Activated naive CD4-positive, alpha-beta T cell treated with anti-CD3 and anti-CD28 coated beads for 36 hours (primary cell): ENCODE measurements at regions of chr2 and their contacts with region 1.

Region 1: GRCh38 chr2:102436323-102436722 is 13.4 kb downstream of the IL18RAP start:
- DNase-seq: peak; percentile 56
- H3K4me3 Mint-ChIP-seq: no peak overlapping the region
- H3K27ac Mint-ChIP-seq: peak overlapping the region; percentile 68
- H3K4me1 Mint-ChIP-seq: peaks cover 27% of the 10 kb centered on the region
- H3K27me3 Mint-ChIP-seq: no peaks in the 10 kb centered on the region

Region 2: DNA sequence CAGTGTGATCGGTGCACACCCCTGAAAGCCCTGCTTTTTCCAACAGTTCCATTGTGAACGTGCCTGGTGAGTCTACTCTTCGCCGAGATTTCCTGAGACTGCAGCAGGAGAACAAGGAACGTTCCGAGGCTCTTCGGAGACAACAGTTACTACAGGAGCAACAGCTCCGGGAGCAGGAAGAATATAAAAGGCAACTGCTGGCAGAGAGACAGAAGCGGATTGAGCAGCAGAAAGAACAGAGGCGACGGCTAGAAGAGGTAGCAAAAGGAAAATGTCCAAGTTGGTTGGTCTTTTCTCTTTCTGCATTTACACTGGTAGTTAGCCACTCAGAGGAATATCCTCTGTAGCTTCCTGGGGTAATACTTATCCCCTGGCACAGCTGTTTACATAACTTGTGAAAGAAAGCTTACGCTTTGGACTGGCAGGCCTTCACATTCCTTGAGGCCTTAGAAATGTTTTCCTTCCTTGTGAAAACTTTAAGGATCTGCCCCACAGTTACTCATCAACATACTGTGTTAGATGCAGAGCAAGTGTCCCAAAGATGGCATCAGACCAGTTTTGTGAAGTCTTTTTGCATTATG is 592.2 kb before region 1 on chr2:
- CTCF ChIA-PET with region 1: no interaction called
- intact Hi-C with region 1: no loop called
- DNase-seq: no peak
- H3K4me3 Mint-ChIP-seq: no peak overlapping the region
- H3K27ac Mint-ChIP-seq: no peak overlapping the region
- H3K4me1 Mint-ChIP-seq: peaks cover 35% of the 10 kb centered on the region
- H3K27me3 Mint-ChIP-seq: no peaks in the 10 kb centered on the region

Region 3: GRCh38 chr2:101900375-101900774 is 535.9 kb before region 1 on chr2:
- CTCF ChIA-PET with region 1: interaction called, 3 read pairs
- intact Hi-C with region 1: loop called (anchors 5 kb)
- DNase-seq: peak; percentile 87
- H3K4me3 Mint-ChIP-seq: no peak overlapping the region
- H3K27ac Mint-ChIP-seq: peak overlapping the region; percentile 87
- H3K4me1 Mint-ChIP-seq: peaks cover 33% of the 10 kb centered on the region
- H3K27me3 Mint-ChIP-seq: peaks cover 2% of the 10 kb centered on the region

Region 4: DNA sequence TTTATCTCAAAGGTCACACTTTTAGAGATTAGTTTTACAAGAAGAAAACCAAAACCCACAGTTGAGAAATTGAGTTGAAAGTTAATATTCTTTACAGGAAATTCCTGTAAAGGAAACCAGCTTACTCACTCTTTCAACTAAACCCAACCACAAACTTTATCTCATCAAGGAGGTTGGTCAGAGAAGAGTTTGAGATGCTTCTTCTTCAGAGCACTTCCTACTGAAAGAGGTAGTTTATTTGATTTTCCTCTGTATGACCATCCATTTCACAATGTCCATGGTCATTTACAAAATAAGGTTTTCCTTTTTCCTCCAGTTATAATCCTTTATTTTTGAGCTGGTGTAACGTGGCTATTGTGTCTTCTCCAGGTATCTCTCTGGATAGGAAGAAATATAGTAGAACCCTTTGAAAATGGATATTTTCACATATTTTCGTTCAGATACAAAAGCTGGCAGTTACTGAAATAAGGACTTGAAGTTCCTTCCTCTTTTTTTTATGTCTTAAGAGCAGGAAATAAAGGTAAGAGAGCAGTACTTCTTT is 17.8 kb before region 1 on chr2:
- CTCF ChIA-PET with region 1: interaction called, 3 read pairs
- intact Hi-C with region 1: loop called (anchors 1 kb)
- DNase-seq: no peak
- H3K4me3 Mint-ChIP-seq: peak overlapping the region; percentile 75
- H3K27ac Mint-ChIP-seq: peak overlapping the region; percentile 92
- H3K4me1 Mint-ChIP-seq: peaks cover 57% of the 10 kb centered on the region
- H3K27me3 Mint-ChIP-seq: no peaks in the 10 kb centered on the region

Region 5: DNA sequence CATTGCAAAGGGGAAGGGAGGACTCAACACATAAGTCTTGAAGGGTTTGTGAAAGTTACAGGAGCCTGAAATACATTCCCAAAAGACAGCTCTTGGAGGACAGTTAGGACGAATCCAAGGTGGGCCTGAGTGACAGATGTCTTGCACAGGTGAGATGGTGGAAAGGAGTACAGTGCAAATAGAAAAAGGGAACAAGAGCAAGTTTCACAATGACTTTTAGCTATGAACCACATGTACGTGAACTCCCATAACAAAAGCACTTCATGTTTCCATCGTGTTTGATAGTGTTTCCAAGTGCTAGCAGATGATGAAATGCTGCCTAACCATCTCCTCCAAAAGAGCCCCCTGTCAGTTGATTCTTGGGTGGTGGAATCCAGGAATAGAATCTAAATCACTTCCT is 11.6 kb before region 1 on chr2:
- CTCF ChIA-PET with region 1: interaction called, 3 read pairs
- intact Hi-C with region 1: loop called (anchors 1 kb)
- DNase-seq: no peak
- H3K4me3 Mint-ChIP-seq: no peak overlapping the region
- H3K27ac Mint-ChIP-seq: peak overlapping the region; percentile 4
- H3K4me1 Mint-ChIP-seq: peaks cover 78% of the 10 kb centered on the region
- H3K27me3 Mint-ChIP-seq: no peaks in the 10 kb centered on the region

Region 6: GRCh38 chr2:102473020-102473419 is 36.7 kb after region 1 on chr2 and contains the start of gene SLC9A4:
- CTCF ChIA-PET with region 1: no interaction called
- intact Hi-C with region 1: no loop called
- DNase-seq: peak; percentile 79
- H3K4me3 Mint-ChIP-seq: no peak within 1 kb of the TSS
- H3K27ac Mint-ChIP-seq: no peak within 1 kb of the TSS
- H3K4me1 Mint-ChIP-seq: no peaks in the 10 kb centered on the region
- H3K27me3 Mint-ChIP-seq: peaks cover 24% of the 10 kb centered on the region
- total RNA-seq, gene SLC9A4: 0.07 to 0.10 TPM

Region 7: GRCh38 chr2:102664471-102664909 is 228.2 kb after region 1 on chr2:
- CTCF ChIA-PET with region 1: no interaction called
- intact Hi-C with region 1: no loop called
- DNase-seq: peak; percentile 82
- H3K4me3 Mint-ChIP-seq: no peak overlapping the region
- H3K27ac Mint-ChIP-seq: peak overlapping the region; percentile 10
- H3K4me1 Mint-ChIP-seq: peaks cover 38% of the 10 kb centered on the region
- H3K27me3 Mint-ChIP-seq: no peaks in the 10 kb centered on the region